ENCODE measurements at regions of chr3 and their contacts with region 1.

Region 1: GRCh38 chr3:157130467-157131251 is 29.3 kb downstream of the CCNL1 start:
- DNase-seq: peak; percentile 86
- ATAC-seq: peak; percentile 19
- H3K4me3 Mint-ChIP-seq: peak overlapping the region; percentile 57
- H3K27ac Mint-ChIP-seq: peak overlapping the region; percentile 95
- H3K4me1 Mint-ChIP-seq: peaks cover 76% of the 10 kb centered on the region
- H3K27me3 Mint-ChIP-seq: no peaks in the 10 kb centered on the region

Region 2: GRCh38 chr3:156483961-156484787 is 646.5 kb before region 1 on chr3:
- CTCF ChIA-PET with region 1: no interaction called
- POLR2A ChIA-PET with region 1: no interaction called
- intact Hi-C with region 1: loop called (anchors 1 to 5 kb)
- DNase-seq: peak; percentile 63
- ATAC-seq: peak; percentile 76
- H3K4me3 Mint-ChIP-seq: peak overlapping the region; percentile 69
- H3K27ac Mint-ChIP-seq: peak overlapping the region; percentile 92
- H3K4me1 Mint-ChIP-seq: peaks cover 35% of the 10 kb centered on the region
- H3K27me3 Mint-ChIP-seq: no peaks in the 10 kb centered on the region

Region 3: GRCh38 chr3:156802821-156803606 is 327.6 kb before region 1 on chr3:
- CTCF ChIA-PET with region 1: no interaction called
- POLR2A ChIA-PET with region 1: no interaction called
- intact Hi-C with region 1: no loop called
- DNase-seq: no peak
- ATAC-seq: no peak
- H3K4me3 Mint-ChIP-seq: no peak overlapping the region
- H3K27ac Mint-ChIP-seq: no peak overlapping the region
- H3K4me1 Mint-ChIP-seq: no peaks in the 10 kb centered on the region
- H3K27me3 Mint-ChIP-seq: no peaks in the 10 kb centered on the region

Region 4: GRCh38 chr3:156816800-156817645 is 313.6 kb before region 1 on chr3:
- CTCF ChIA-PET with region 1: interaction called, 3 read pairs
- POLR2A ChIA-PET with region 1: no interaction called
- intact Hi-C with region 1: loop called (anchors 2 to 5 kb)
- DNase-seq: peak; percentile 92
- ATAC-seq: peak; percentile 83
- H3K4me3 Mint-ChIP-seq: peak overlapping the region; percentile 79
- H3K27ac Mint-ChIP-seq: peak overlapping the region; percentile 92
- H3K4me1 Mint-ChIP-seq: peaks cover 36% of the 10 kb centered on the region
- H3K27me3 Mint-ChIP-seq: no peaks in the 10 kb centered on the region

Region 5: DNA sequence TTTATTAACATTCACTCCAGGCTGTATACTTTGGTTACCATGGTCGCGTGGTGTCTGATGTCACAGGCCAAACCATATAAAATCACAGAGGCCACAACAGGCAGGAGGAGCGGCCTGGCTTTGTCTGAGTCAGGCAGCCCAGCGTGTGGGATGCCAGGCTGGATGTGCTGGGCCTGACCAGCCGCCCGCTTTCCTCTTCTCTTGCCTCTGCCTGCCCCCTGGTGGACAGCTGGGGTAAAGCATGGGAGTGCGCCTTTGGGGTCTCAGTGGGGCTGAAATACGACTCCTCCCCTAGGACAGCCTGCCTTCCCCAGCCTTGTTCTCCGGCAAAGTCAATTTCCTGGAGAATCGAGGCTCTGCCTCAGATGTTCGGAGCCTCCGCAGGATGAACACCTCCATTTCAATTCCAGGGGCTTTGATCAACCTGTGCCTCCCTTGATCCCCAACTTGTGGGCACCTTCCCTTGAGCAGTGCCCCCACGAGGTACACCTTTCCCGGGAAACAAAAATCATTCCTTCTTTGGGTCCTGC is 48.9 kb before region 1 on chr3:
- CTCF ChIA-PET with region 1: interaction called, 93 read pairs
- POLR2A ChIA-PET with region 1: interaction called, 35 read pairs
- intact Hi-C with region 1: no loop called
- DNase-seq: peak; percentile 90
- ATAC-seq: peak; percentile 91
- H3K4me3 Mint-ChIP-seq: no peak overlapping the region
- H3K27ac Mint-ChIP-seq: peak overlapping the region; percentile 66
- H3K4me1 Mint-ChIP-seq: peaks cover 32% of the 10 kb centered on the region
- H3K27me3 Mint-ChIP-seq: no peaks in the 10 kb centered on the region

Region 6: GRCh38 chr3:157103280-157103679 is 27.4 kb before region 1 on chr3:
- CTCF ChIA-PET with region 1: interaction called, 4 read pairs
- POLR2A ChIA-PET with region 1: interaction called, 3 read pairs
- intact Hi-C with region 1: loop called (anchors 1 to 2 kb)
- DNase-seq: peak; percentile 47
- ATAC-seq: peak; percentile 65
- H3K4me3 Mint-ChIP-seq: no peak overlapping the region
- H3K27ac Mint-ChIP-seq: peak overlapping the region; percentile 88
- H3K4me1 Mint-ChIP-seq: peaks cover 51% of the 10 kb centered on the region
- H3K27me3 Mint-ChIP-seq: no peaks in the 10 kb centered on the region

Region 7: DNA sequence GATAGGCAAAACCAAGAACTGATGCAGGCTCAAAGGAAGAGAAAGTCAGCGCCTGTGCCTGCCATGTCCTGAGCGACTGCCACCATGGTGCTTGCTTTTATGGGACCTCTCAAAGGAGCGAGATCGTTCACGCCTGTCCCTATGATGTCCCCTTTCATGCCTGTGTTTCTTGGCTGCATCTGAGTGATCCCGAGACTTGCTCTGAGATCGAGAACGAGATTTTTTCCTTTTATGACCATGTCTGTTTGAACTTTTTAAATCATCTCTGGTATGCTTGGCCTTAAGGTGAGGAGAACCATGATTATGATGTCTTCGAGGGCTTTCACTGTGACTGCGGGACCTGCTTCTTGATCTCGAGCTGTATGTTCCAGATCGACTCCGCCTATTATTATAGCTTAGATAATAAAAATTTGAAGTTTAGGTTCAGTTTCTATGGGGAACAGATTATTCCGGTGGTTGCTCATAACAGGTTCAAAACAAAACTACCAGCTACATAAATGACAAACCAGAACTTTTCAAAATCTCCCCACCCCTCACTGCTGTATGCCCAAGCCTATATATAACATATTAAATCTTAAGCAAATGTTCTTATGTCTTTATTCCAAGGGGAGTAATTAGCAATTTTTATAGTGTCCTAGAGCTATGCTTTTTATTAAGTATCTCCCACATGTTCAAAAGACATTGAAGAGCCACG is 17.7 kb after region 1 on chr3:
- CTCF ChIA-PET with region 1: interaction called, 11 read pairs
- POLR2A ChIA-PET with region 1: interaction called, 4 read pairs
- intact Hi-C with region 1: no loop called
- DNase-seq: peak; percentile 43
- ATAC-seq: peak; percentile 74
- H3K4me3 Mint-ChIP-seq: peak overlapping the region; percentile 27
- H3K27ac Mint-ChIP-seq: peak overlapping the region; percentile 74
- H3K4me1 Mint-ChIP-seq: peaks cover 45% of the 10 kb centered on the region
- H3K27me3 Mint-ChIP-seq: no peaks in the 10 kb centered on the region